MCF 10A (cell line): ENCODE measurements at regions of chr1 and their contacts with region 1.

Region 1: DNA sequence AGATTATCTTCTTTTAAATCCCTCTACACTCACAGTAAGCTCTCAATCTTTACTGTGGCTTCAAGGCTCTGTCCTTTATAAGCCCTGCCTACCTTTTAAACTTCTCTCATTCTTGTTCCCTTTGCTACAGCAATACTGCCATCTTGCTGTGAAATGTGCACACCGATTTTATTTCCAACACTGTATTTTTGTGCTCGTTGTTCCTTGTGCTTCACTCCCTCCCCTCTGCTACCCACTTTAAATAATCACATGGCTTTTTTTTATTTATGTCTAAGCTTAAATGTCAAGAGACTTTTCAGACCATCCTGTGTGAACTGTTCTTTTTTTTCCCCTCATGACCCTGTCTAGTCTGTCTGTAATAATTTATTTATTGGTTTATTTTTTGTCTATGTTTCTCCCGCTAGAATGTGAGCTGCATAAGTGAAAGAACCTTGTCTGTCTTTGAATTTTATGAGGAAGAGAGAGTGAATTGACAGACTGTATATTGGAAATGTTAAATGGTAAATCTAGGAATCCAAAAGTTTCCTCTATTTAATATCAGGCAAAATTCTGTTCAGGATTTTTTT is 45.7 kb downstream of the ABCD3 start:
- DNase-seq: peak; percentile 60
- H3K4me3 Mint-ChIP-seq: no peak overlapping the region
- H3K27ac Mint-ChIP-seq: no peak overlapping the region
- H3K4me1 Mint-ChIP-seq: peaks cover 6% of the 10 kb centered on the region
- H3K27me3 Mint-ChIP-seq: no peaks in the 10 kb centered on the region
- CTCF ChIP-seq: peak; percentile 51

Region 2: GRCh38 chr1:94045465-94046056 is 418.3 kb before region 1 on chr1:
- CTCF ChIA-PET with region 1: interaction called, 3 read pairs
- POLR2A ChIA-PET with region 1: interaction called, 3 read pairs
- intact Hi-C with region 1: loop called (anchors 2 kb)
- DNase-seq: peak; percentile 90
- H3K4me3 Mint-ChIP-seq: no peak overlapping the region
- H3K27ac Mint-ChIP-seq: peak overlapping the region; percentile 51
- H3K4me1 Mint-ChIP-seq: peaks cover 18% of the 10 kb centered on the region
- H3K27me3 Mint-ChIP-seq: no peaks in the 10 kb centered on the region
- CTCF ChIP-seq: peak; percentile 45

Region 3: GRCh38 chr1:94342405-94342804 is 121.4 kb before region 1 on chr1:
- CTCF ChIA-PET with region 1: interaction called, 25 read pairs
- POLR2A ChIA-PET with region 1: no interaction called
- intact Hi-C with region 1: no loop called
- DNase-seq: no peak
- H3K4me3 Mint-ChIP-seq: no peak overlapping the region
- H3K27ac Mint-ChIP-seq: no peak overlapping the region
- H3K4me1 Mint-ChIP-seq: peaks cover 7% of the 10 kb centered on the region
- H3K27me3 Mint-ChIP-seq: peaks cover 24% of the 10 kb centered on the region
- CTCF ChIP-seq: no peak

Region 4: DNA sequence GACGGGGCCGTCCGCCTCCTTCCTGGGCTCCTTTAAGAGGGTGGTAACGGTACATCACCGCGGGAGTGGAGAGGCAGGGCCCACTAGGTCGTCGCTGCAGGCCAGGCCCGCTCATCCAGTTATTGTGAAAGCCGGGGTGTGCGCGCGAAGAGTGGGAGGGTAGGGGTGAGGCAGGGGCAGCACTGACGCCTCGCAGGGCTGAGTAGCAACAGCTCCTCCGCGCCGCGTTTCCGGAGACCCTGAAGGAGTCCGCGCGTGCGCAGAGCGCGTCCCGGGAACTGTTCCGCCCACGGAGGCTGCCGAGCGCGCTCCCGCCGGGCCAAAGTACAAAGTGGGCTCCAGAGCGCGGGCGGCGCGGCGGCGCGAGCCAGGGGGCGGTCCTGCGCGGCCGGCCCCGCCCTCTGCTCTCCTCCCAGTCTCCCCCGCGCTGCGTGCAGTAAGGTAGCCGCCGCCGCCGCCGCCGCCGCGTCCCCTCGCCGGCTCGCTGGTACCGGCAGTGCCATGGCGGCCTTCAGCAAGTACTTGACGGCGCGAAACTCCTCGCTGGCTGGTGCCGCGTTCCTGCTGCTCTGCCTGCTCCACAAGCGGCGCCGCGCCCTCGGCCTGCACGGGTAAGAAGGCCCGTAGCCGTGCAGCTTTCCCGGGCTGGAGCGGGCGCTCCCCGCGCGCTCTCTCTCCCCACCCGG is 45.7 kb before region 1 on chr1 and contains the start of gene ABCD3:
- CTCF ChIA-PET with region 1: interaction called, 19 read pairs
- POLR2A ChIA-PET with region 1: interaction called, 14 read pairs
- intact Hi-C with region 1: no loop called
- DNase-seq: peak; percentile 94
- H3K4me3 Mint-ChIP-seq: no peak within 1 kb of the TSS
- H3K27ac Mint-ChIP-seq: no peak within 1 kb of the TSS
- H3K4me1 Mint-ChIP-seq: peaks cover 38% of the 10 kb centered on the region
- H3K27me3 Mint-ChIP-seq: peaks cover 11% of the 10 kb centered on the region
- CTCF ChIP-seq: no peak
- total RNA-seq, gene ABCD3: 26.5 and 32.5 TPM in 2 replicates

Region 5: DNA sequence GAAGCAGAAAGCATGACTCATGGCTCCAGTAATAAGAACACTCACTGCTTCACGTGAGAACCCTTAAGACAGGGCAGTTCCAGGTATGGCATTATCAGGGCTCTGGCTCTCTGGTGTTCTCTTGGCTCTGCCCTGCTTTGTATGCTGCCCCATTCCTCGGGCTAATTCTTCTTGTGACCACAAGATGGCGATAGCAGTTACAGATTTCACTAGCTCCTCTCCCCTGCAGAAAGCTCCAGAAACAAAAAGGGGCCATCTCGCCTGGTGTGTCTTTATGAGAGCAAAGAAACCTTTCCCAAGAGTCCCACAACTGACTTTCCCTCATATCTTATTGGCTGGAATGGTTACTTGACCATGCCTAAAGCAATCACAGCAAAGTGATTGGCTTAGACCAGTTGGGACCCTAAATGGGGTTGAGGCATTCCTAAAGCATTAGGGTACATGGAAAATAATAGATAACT is 17.7 kb after region 1 on chr1:
- CTCF ChIA-PET with region 1: interaction called, 25 read pairs
- POLR2A ChIA-PET with region 1: interaction called, 3 read pairs
- intact Hi-C with region 1: no loop called
- DNase-seq: peak; percentile 78
- H3K4me3 Mint-ChIP-seq: no peak overlapping the region
- H3K27ac Mint-ChIP-seq: no peak overlapping the region
- H3K4me1 Mint-ChIP-seq: no peaks in the 10 kb centered on the region
- H3K27me3 Mint-ChIP-seq: no peaks in the 10 kb centered on the region
- CTCF ChIP-seq: peak; percentile 71